K562 (cell line): ENCODE measurements at regions of chr12 and their contacts with region 1.

Region 1: DNA sequence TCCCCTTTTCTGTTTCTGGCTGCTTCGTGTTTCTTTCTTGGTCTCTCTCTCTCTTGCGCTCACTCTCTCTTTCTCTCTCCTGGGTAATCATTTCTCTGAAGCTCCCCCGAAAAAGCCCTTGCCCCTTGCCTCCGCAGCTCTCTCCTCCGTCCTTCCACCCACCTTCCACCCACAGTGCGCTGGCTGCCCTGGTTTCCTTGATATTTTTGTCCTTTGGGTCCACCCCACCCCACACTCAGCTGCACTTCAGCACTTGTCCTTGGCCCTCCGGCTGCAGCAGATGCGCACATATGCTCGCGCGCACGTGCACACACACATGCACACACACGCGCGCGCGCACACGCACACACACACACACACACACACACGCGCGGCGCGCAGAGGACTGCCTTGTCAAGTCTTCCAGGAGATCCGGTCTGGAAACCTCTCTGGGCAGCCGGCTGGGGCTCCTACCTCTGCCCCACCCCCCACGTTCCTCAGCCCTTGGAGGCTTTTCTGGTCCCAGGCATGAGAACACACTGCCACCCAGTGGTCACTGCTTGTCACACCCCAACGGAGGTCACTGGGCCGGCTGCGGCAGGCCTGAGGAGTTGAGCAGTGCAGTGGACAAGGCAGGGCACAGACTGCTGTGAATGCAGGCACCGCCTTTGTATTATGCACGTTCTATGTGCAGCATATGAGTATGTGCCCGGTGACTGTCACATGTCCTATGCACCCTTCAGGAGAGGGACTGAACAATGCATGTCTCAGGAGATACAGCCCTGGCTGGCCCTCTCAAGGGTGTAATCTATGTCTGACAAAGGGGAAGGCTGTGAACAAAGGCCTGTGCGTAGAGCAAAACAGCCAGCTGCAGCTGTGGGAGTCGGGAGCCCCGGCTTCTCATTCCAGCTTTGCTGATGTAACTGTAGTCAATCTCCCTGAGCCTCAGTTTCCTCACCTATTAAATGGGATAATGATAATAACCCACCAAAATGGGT is 6.5 kb downstream of the LAG3 start:
- DNase-seq: peak; percentile 83 to 93 (median 86)
- ATAC-seq: peak; percentile 98
- H3K4me3 ChIP-seq: peak overlapping the region; percentile 41
- H3K27ac ChIP-seq: peak overlapping the region; percentile 39; the same call in 1 of the 3 replicates
- H3K4me1 ChIP-seq: peaks cover 5 to 21% of the 10 kb centered on the region in 2 experiments; a peak in 4 of 5 replicates
- H3K27me3 ChIP-seq: no peaks in the 10 kb centered on the region
- CTCF ChIP-seq: peak; percentile 87 to 89 (median 89)
- EP300 ChIP-seq: no peak
- POLR2A ChIP-seq: peak; percentile 35; the same call in 1 of the 2 replicates
- RAD21 ChIP-seq: peak; percentile 93 to 97

Region 2: GRCh38 chr12:6613776-6614512 is 164.9 kb before region 1 on chr12:
- CTCF ChIA-PET with region 1: no interaction called
- POLR2A ChIA-PET with region 1: no interaction called
- in situ Hi-C with region 1: no loop called
- intact Hi-C with region 1: loop called (anchors 5 kb)
- DNase-seq: peak; percentile 82 to 95 (median 87)
- ATAC-seq: peak; percentile 89
- H3K4me3 ChIP-seq: no peak overlapping the region
- H3K27ac ChIP-seq: peak overlapping the region; percentile 85
- H3K4me1 ChIP-seq: peaks cover 29 to 43% of the 10 kb centered on the region in 2 experiments
- H3K27me3 ChIP-seq: no peaks in the 10 kb centered on the region
- CTCF ChIP-seq: peak; percentile 24 to 44 (median 27); a peak in 2 of 6 replicates
- EP300 ChIP-seq: no peak
- POLR2A ChIP-seq: peak; percentile 52
- RAD21 ChIP-seq: 0 out of 4 replicates have a peak, but pooled peaks have one; percentile 9 to 11

Region 3: DNA sequence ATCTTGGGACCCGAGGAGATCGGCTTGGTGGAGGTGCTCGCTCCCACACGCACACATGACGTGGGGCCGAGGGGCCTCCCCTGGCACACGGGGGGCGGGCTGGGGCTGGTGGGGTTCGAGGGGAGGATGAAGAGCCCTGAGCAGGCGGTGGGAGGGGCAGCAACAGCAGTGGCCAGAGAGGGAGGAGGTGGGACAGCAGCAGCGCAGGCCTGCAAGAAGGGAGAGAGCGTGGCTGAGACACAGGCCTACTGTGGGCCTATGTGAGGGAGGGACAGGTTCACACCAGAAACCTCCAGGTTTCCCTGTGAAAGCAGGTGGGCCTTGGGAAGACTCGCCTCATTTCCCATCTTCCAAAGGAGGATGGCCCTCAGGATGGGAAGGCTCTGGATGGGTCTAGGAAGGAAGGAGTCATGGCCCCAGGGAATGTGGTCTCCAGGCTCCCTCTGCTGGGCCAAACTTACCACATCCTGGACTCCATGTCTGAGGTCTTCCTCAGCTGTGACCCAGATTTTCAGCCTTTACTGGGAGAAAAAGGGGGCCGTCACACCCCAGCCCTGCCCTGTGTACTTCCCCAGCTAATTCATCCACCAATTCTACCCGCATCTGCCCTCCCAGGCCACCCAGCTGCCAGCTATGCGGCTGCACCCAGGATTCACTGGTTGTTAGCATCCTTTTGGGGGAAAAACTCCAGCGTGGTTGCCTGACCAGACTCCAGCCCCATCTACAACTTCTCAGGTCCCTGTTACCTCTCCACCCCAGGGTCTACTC is 81.1 kb before region 1 on chr12:
- CTCF ChIA-PET with region 1: no interaction called
- POLR2A ChIA-PET with region 1: no interaction called
- in situ Hi-C with region 1: no loop called
- intact Hi-C with region 1: no loop called
- DNase-seq: peak; percentile 40 to 64 (median 54)
- ATAC-seq: peak; percentile 88
- H3K4me3 ChIP-seq: no peak overlapping the region
- H3K27ac ChIP-seq: no peak overlapping the region
- H3K4me1 ChIP-seq: peaks cover 0 to 30% of the 10 kb centered on the region in 2 experiments; a peak in 2 of 5 replicates
- H3K27me3 ChIP-seq: peaks cover 11 to 27% of the 10 kb centered on the region in 2 experiments; a peak in 4 of 5 replicates
- CTCF ChIP-seq: peak; percentile 70 to 77 (median 73)
- EP300 ChIP-seq: no peak
- POLR2A ChIP-seq: no peak
- RAD21 ChIP-seq: peak; percentile 57 to 80

Region 4: GRCh38 chr12:6735448-6736191 is 43.2 kb before region 1 on chr12:
- CTCF ChIA-PET with region 1: interaction called, 6 read pairs
- POLR2A ChIA-PET with region 1: no interaction called
- in situ Hi-C with region 1: no loop called
- intact Hi-C with region 1: loop called (anchors 1 kb)
- DNase-seq: peak; percentile 51 to 67 (median 53)
- ATAC-seq: peak; percentile 97
- H3K4me3 ChIP-seq: no peak overlapping the region
- H3K27ac ChIP-seq: no peak overlapping the region
- H3K4me1 ChIP-seq: peaks cover 0 to 2% of the 10 kb centered on the region in 2 experiments; a peak in 2 of 5 replicates
- H3K27me3 ChIP-seq: no peaks in the 10 kb centered on the region
- CTCF ChIP-seq: peak; percentile 70 to 76 (median 73)
- EP300 ChIP-seq: no peak
- POLR2A ChIP-seq: no peak
- RAD21 ChIP-seq: peak; percentile 54 to 75

Region 5: GRCh38 chr12:6752921-6753771 is 25.7 kb before region 1 on chr12 and contains the start of gene MLF2:
- CTCF ChIA-PET with region 1: interaction called, 24 read pairs
- POLR2A ChIA-PET with region 1: interaction called, 3 read pairs
- in situ Hi-C with region 1: no loop called
- intact Hi-C with region 1: loop called (anchors 1 kb)
- DNase-seq: peak; percentile 93 to 97 (median 94)
- ATAC-seq: peak; percentile 97
- H3K4me3 ChIP-seq: peak within 1 kb of the TSS; percentile 99
- H3K27ac ChIP-seq: peak within 1 kb of the TSS; percentile 99
- H3K4me1 ChIP-seq: peaks cover 22 to 25% of the 10 kb centered on the region in 2 experiments
- H3K27me3 ChIP-seq: no peaks in the 10 kb centered on the region
- CTCF ChIP-seq: peak in 1 of 3 experiments; percentile 93; a peak in 3 of 6 replicates
- EP300 ChIP-seq: 0 out of 2 replicates have a peak, but pooled peaks have one; percentile 15
- POLR2A ChIP-seq: peak; percentile 90
- RAD21 ChIP-seq: no peak; a peak in 1 of 4 replicates
- polyA plus RNA-seq, gene MLF2: 11.4 to 15.6 TPM

Region 6: DNA sequence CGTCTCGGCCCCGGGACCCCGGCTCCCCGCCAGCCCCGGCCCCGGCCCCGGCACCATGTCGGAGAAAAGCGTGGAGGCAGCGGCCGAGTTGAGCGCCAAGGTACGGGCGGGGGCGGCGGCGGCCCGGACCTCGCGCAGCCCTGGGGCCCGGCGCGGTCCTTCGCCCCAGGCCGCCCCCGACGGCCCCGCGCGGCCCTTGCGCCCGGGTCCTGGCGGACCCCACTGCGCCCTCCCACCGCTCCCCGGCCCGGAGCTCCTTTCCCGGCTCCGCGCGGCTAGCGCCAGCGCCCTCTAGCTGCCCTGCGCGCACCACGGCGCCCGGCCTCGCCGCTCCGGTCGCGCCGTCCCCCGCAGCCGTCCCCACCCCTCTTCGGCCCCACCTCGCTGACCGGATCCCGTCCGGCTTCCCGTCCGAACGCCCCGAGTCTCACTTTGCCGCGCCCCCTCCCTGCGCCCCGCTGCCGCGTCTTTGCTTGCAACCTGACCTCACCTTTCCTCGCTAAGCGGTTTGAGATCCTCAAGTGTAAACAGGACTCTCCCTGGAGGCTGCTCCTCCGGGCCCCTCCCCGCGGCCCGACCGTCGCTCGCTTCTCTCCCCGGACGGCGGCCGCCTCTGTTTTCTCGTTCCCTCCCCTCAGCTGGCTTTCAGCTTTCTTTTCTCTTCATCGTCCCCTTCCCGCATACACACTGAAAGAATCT is 12.1 kb before region 1 on chr12:
- CTCF ChIA-PET with region 1: interaction called, 3 read pairs
- POLR2A ChIA-PET with region 1: interaction called, 17 read pairs
- in situ Hi-C with region 1: no loop called
- intact Hi-C with region 1: no loop called
- DNase-seq: peak; percentile 65 to 81 (median 71)
- ATAC-seq: peak; percentile 73
- H3K4me3 ChIP-seq: peak overlapping the region; percentile 80
- H3K27ac ChIP-seq: peak overlapping the region; percentile 89
- H3K4me1 ChIP-seq: peaks cover 29 to 34% of the 10 kb centered on the region in 2 experiments; a peak in 4 of 5 replicates
- H3K27me3 ChIP-seq: no peaks in the 10 kb centered on the region; a peak in 1 of 5 replicates
- CTCF ChIP-seq: peak; percentile 36 to 85 (median 60)
- EP300 ChIP-seq: no peak
- POLR2A ChIP-seq: no peak; the same call in 1 of the 2 replicates
- RAD21 ChIP-seq: peak in 1 of 2 experiments; percentile 27; a peak in 1 of 4 replicates

Region 7: DNA sequence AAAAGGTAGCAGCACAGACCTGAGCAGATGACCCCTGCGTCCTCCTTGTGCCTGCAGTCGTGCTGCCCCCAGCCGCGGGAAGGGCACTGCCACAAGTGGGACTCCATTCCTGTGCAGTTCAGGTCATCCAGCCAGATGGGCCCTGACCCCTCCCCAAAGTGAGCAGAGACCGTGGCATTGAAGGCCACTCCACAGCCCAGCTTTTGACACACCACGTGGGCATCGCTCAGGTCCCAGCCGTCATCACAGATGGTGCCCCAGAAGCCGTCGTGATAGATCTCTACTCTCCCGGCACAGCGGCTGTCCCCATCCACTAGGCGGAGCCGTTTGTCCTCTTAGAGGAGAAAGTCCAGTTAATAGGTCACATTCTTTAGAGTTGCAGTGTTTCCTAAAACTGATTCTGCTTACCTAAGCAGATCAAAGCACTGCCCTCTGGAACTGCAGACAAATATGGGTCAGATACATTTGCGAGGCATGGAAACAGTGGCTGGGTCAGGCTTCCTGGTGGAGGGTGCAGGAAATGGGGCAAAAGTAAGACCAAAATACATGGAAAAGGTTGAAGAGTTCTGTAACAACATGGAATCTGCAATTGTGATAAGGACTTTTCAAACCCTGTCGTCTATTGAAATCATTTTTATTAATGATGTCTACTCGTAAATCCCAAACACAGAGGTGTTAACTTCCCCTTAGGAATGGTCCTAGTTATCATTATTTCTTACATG is 595.7 kb after region 1 on chr12:
- CTCF ChIA-PET with region 1: no interaction called
- POLR2A ChIA-PET with region 1: no interaction called
- in situ Hi-C with region 1: no loop called
- intact Hi-C with region 1: no loop called
- DNase-seq: peak in 3 of 4 experiments; percentile 8 to 57 (median 37)
- ATAC-seq: peak; percentile 81
- H3K4me3 ChIP-seq: no peak overlapping the region
- H3K27ac ChIP-seq: no peak overlapping the region
- H3K4me1 ChIP-seq: peaks cover 0 to 4% of the 10 kb centered on the region in 2 experiments; a peak in 4 of 5 replicates
- H3K27me3 ChIP-seq: no peaks in the 10 kb centered on the region
- CTCF ChIP-seq: peak; percentile 62 to 73 (median 71)
- EP300 ChIP-seq: no peak
- POLR2A ChIP-seq: no peak
- RAD21 ChIP-seq: peak; percentile 43 to 68